ENCODE measurements at regions of chr10 and their contacts with region 1.

Region 1: GRCh38 chr10:32055813-32056600 is at the start of gene KIF5B:
- DNase-seq: peak; percentile 59
- H3K4me3 ChIP-seq: peak within 1 kb of the TSS; percentile 83
- H3K27ac ChIP-seq: peak within 1 kb of the TSS; percentile 68
- H3K27me3 ChIP-seq: no peaks in the 10 kb centered on the region
- CTCF ChIP-seq: no peak
- polyA plus RNA-seq, gene KIF5B: 61.0 and 84.0 TPM in 2 replicates

Region 2: GRCh38 chr10:32148864-32149251 is 92.9 kb after region 1 on chr10:
- CTCF ChIA-PET with region 1: no interaction called
- POLR2A ChIA-PET with region 1: interaction called, 12 read pairs
- DNase-seq: no peak
- H3K4me3 ChIP-seq: no peak overlapping the region; the same call in 1 of the 2 replicates
- H3K27ac ChIP-seq: peak overlapping the region; percentile 65
- H3K27me3 ChIP-seq: no peaks in the 10 kb centered on the region
- CTCF ChIP-seq: no peak

Region 3: DNA sequence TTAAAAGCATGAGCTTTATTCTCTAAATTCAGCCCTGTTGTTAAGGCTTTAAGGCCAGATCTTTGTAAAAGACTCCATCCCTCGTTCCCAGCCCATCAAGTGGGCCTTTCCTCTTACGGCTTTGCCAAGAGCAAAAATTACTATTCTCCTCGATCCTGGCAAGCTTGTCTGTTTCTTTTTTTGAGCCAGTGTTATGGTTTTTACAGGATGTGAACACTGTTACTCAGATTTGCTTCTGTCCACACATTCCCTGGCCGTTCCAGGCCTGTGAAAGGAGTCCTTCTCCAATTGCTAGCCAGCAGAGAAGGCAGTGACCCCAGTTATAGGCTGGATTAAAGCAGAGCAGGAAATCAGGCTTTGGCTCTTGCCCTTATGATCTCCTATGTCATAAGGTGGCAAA is 337.9 kb after region 1 on chr10:
- CTCF ChIA-PET with region 1: no interaction called
- POLR2A ChIA-PET with region 1: no interaction called
- DNase-seq: no peak
- H3K4me3 ChIP-seq: no peak overlapping the region
- H3K27ac ChIP-seq: no peak overlapping the region
- H3K27me3 ChIP-seq: no peaks in the 10 kb centered on the region
- CTCF ChIP-seq: no peak

Region 4: DNA sequence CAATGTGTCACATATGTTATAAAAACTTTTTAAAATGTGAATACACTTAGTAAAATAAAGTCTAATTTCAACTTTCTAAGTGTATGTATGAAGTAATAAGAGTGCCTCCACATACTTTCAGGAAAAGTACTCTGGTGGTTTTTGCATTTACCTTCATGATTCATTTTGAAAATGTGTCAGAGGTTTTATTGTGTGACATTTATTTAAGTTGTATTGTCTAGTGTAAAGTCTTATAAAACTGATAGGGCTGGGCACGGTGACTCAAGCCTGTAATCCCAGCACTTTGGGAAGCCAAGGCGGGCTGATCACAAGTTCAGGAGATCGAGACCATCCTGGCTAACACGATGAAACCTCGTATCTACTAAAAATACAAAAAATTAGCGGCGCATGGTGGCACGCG is 675.5 kb after region 1 on chr10:
- CTCF ChIA-PET with region 1: no interaction called
- POLR2A ChIA-PET with region 1: no interaction called
- DNase-seq: no peak
- H3K4me3 ChIP-seq: no peak overlapping the region
- H3K27ac ChIP-seq: no peak overlapping the region
- H3K27me3 ChIP-seq: no peaks in the 10 kb centered on the region
- CTCF ChIP-seq: no peak